ENCODE measurements at regions of chr22 and their contacts with region 1.

Region 1: GRCh38 chr22:32528984-32529982 is 54.7 kb downstream of the FBXO7 start:
- DNase-seq: peak; percentile 84
- H3K4me3 ChIP-seq: no peak overlapping the region
- H3K27ac ChIP-seq: no peak overlapping the region
- H3K4me1 ChIP-seq: peaks cover 12% of the 10 kb centered on the region
- H3K27me3 ChIP-seq: no peaks in the 10 kb centered on the region
- CTCF ChIP-seq: peak; percentile 86

Region 2: DNA sequence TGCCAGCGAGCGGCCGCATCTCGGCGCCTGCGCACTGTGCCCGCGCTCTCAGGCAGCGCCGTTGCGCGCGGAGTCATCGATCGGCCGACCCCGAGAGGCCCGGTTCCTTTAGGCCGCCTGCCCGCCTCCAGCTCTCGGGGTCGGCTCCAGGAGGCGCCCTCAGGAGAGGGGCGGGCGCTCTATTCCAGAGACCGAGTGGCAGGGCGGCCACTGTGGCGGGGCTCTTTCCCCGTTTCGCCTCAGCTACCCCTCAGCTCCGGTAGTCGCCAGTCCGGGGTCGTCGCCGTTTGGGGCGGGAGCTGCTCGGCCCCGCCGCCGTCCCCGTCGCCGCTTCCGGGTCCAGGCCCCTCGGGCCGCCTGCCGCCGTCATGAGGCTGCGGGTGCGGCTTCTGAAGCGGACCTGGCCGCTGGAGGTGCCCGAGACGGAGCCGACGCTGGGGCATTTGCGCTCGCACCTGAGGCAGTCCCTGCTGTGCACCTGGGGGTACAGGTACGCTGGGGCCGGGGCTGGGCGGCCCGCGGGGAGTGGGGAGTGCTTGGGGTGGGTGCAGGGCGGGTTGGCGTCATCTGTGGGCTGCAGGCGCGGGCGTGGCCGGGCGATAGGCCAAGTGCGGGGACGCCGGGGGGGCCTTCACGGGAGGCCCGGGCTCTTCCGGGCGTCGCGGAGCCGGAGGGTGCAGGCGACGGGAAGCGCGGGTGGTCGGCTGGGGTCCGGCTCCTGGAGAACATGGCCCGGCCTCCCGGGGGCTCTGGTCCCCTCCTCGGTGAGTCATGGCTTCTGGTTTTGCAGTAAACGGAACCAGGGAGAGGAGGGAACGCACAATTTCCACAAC is 54.4 kb before region 1 on chr22 and contains the start of gene FBXO7:
- intact Hi-C with region 1: no loop called
- DNase-seq: peak; percentile 92
- H3K4me3 ChIP-seq: peak within 1 kb of the TSS; percentile 72
- H3K27ac ChIP-seq: peak within 1 kb of the TSS; percentile 97
- H3K4me1 ChIP-seq: peaks cover 6% of the 10 kb centered on the region
- H3K27me3 ChIP-seq: no peaks in the 10 kb centered on the region
- CTCF ChIP-seq: no peak
- total RNA-seq, gene FBXO7: 62.1 to 81.1 TPM

Region 3: DNA sequence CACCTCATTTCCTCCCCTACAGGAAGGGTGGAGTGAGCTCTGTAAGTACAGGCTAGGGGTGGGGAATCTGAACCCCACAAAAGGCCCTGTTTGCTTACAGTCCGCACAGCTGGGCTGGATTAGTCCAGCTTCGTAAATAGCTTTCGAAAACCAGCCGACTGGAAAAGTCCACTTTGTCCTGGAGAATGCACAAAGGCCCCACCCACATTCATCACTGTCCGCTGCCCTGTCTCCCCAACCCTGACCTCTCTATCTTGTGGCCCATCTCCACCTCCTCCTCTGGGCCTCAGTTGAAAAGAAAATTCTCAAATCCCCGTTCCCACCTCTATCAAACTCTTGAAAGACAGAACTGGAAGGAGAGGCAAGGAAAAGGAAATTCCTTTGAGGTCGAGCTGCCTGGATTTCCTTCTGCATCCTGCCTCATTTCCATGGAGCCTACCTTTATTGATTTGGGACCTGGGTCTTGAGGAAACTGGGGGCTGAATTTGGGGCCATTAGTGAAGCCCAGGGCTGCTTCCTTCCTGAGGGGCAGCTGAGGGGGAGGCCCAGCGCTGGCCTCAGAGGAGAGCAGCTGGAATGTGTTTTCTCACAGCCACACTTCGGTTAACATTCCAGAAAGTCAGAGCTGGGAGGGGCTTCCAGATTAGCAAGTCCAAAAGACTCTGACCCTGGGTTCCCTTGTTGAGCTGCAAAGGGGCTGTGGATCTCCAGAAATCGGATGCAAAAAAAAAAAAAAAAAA is 92.9 kb after region 1 on chr22:
- intact Hi-C with region 1: loop called (anchors 10 kb)
- DNase-seq: peak; percentile 39
- H3K4me3 ChIP-seq: no peak overlapping the region
- H3K27ac ChIP-seq: peak overlapping the region; percentile 60
- H3K4me1 ChIP-seq: no peaks in the 10 kb centered on the region
- H3K27me3 ChIP-seq: no peaks in the 10 kb centered on the region
- CTCF ChIP-seq: no peak

Region 4: GRCh38 chr22:32655068-32655467 is 125.8 kb after region 1 on chr22:
- intact Hi-C with region 1: loop called (anchors 5 kb)
- DNase-seq: no peak
- H3K4me3 ChIP-seq: no peak overlapping the region
- H3K27ac ChIP-seq: no peak overlapping the region
- H3K4me1 ChIP-seq: no peaks in the 10 kb centered on the region
- H3K27me3 ChIP-seq: no peaks in the 10 kb centered on the region
- CTCF ChIP-seq: no peak

Region 5: DNA sequence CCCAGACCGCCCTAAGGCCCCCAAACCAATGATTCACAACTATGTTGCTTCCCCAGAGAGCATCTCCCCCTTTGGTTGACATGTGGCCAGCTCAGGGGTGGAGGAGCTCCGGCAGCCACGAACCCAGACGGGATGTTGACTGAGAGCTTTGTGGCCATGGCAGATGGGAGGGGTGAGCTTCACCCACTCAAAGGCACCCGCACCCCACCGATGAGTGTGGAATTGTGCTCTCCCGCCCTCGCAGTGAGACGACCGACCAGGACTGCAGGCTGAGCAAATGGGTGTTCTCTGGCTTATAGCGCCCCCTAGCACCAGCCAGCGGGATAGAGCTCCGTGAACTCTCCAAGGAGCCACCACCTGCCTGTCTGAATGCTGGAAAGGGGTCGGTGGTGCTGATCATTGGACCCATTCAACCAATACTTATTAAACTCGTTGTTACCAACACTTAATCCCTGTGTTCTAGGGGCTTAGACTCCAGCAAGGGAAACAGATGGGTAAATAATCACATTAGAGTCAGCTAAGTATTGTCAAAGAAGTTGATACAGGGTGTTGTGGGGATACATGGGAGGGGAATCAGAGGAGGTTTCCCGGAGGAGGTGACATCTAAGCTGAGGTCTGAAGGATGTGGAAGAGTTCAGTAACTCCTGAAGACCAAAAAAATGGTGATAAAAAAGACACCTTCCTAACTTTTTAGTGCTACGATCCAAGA is 267.7 kb after region 1 on chr22:
- intact Hi-C with region 1: loop called (anchors 2 kb)
- DNase-seq: peak; percentile 69
- H3K4me3 ChIP-seq: no peak overlapping the region
- H3K27ac ChIP-seq: no peak overlapping the region
- H3K4me1 ChIP-seq: no peaks in the 10 kb centered on the region
- H3K27me3 ChIP-seq: peaks cover 12% of the 10 kb centered on the region
- CTCF ChIP-seq: peak; percentile 90

Region 6: DNA sequence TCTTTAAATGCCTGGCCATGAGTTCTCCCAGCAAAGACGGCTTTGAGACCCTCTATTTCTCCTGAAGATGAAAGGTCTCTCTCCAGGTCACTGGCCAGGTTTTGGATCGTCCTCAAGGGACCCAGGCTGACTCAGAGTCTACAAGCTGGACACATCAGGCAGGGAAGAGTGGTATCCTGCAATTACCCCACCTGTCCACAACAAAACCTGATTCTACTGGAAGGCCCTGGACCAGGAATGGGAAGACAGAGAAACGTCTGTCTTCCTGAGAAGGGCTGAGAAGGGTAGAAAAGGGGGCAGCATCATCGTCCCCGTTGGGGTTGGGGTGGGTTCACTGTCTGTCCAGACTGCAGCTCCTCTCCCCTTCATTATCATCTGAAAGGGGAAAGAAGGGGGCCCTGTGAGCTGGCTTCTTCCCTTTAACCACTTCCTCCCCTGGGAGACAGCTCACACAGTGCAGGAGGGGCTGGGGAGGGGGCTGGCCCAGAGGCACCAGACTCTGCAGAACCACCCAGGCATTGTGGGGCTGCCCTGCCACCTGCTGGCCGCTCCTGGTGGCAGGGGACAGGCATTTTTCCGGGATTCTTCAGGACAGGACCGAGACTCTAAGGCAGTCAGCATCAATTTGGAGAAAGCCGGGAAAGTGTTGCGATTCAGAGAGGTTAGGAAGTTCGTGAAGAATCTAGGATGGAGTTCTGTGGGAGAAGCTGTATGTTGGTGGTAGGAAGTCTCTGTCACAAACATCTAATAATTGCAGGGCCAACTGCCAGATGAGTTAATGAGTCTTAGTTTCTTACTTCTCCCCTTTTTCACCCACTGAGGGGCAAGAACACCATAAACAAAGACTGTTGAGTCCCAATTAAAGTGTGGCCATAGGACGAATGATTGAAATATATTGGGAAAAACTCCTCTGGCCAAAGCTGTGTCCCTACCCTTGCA is 471.3 kb after region 1 on chr22:
- intact Hi-C with region 1: loop called (anchors 5 kb)
- DNase-seq: peak; percentile 34
- H3K4me3 ChIP-seq: no peak overlapping the region
- H3K27ac ChIP-seq: no peak overlapping the region
- H3K4me1 ChIP-seq: no peaks in the 10 kb centered on the region
- H3K27me3 ChIP-seq: no peaks in the 10 kb centered on the region
- CTCF ChIP-seq: peak; percentile 84